ENCODE measurements at regions of chr9 and their contacts with region 1.

Region 1: DNA sequence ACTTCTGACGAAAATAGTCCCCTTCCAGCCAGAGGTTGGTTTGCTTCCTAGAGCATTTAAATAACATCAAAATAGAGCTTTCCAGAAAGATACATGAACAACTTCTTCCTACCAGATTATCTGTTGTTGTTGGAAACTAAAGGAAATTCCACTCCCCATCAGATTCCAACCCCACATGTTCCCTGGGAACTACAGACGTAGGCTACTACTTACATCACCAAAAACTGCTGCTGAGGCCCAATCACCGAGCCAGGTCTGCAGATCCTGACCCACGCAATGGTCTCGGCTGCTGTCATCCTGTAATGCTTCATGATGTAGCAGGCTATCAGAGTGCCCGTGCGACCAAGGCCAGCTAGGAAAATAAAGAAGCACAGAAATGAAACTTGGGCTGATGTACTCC is 73.4 kb downstream of the HABP4 start:
- DNase-seq: peak in 1 of 2 donors; percentile 47
- ATAC-seq: peak in 1 of 4 donors; percentile 65
- H3K4me3 ChIP-seq: no peak overlapping the region
- H3K27ac ChIP-seq: peak overlapping the region; percentile 21
- H3K4me1 ChIP-seq: no peaks in the 10 kb centered on the region
- H3K27me3 ChIP-seq: no peaks in the 10 kb centered on the region
- CTCF ChIP-seq: no peak

Region 2: GRCh38 chr9:96398582-96399324 is 124.6 kb before region 1 on chr9:
- intact Hi-C with region 1: no loop called
- DNase-seq: no peak
- ATAC-seq: no peak
- H3K4me3 ChIP-seq: no peak overlapping the region
- H3K27ac ChIP-seq: no peak overlapping the region
- H3K4me1 ChIP-seq: no peaks in the 10 kb centered on the region
- H3K27me3 ChIP-seq: no peaks in the 10 kb centered on the region
- CTCF ChIP-seq: no peak

Region 3: GRCh38 chr9:96581786-96582185 is 58.4 kb after region 1 on chr9:
- intact Hi-C with region 1: loop called in 1 of 2 experiments (anchors 10 kb)
- DNase-seq: no peak
- ATAC-seq: no peak
- H3K4me3 ChIP-seq: no peak overlapping the region
- H3K27ac ChIP-seq: no peak overlapping the region
- H3K4me1 ChIP-seq: no peaks in the 10 kb centered on the region
- H3K27me3 ChIP-seq: no peaks in the 10 kb centered on the region
- CTCF ChIP-seq: no peak